Natural killer cell (primary cell): ENCODE measurements at regions of chr6 and their contacts with region 1.

Region 1: DNA sequence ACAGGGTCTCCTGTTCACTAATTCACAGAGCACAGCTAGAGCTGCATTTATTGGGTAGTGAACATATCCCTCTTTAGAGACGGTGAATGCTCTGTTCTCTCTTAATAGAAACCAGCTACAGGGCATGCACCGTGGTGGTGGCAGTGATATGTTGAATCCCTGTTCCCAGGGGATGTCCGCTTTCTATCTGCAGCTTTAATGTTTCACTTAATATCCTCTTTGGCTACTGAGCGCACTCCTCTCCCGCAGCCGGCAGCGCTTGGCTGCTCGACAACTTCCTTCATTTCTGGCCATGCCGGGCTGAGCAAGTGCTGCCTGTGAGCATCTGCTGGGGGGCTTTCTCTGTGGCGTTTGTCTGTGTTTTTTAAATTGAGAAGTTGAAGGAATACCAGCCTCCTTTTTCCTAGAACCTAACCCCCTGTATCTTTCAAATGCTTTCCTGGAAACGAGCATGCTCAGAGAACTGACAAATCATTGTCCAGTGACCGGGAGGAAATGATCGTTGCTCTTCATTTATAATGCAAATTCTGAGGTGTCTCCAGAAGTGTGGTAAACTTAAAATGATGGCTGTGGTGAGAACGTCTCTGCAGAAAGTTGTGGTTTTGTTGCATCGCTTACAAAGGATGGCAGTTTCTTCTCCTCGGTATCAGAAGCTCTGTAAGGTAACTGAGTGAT is 297.9 kb downstream of the UTRN start:
- DNase-seq: peak in 1 of 2 donors; percentile 71
- ATAC-seq: peak; percentile 75 to 85 (median 80)
- H3K4me3 ChIP-seq: peak overlapping the region; percentile 19
- H3K4me3 Mint-ChIP-seq: peak overlapping the region; percentile 94
- H3K27ac ChIP-seq: peak overlapping the region; percentile 34
- H3K27ac Mint-ChIP-seq: peak overlapping the region; percentile 90 to 91
- H3K4me1 ChIP-seq: peaks cover 4% of the 10 kb centered on the region
- H3K4me1 Mint-ChIP-seq: peaks cover 53 to 57% of the 10 kb centered on the region in 2 donors
- H3K27me3 ChIP-seq: no peaks in the 10 kb centered on the region
- H3K27me3 Mint-ChIP-seq: no peaks in the 10 kb centered on the region
- CTCF ChIP-seq: no peak

Region 2: GRCh38 chr6:144659202-144660182 is 76.4 kb after region 1 on chr6:
- intact Hi-C with region 1: loop called (anchors 5 kb)
- DNase-seq: peak in 1 of 2 donors; percentile 32
- ATAC-seq: peak; percentile 61 to 74 (median 64)
- H3K4me3 ChIP-seq: no peak overlapping the region
- H3K4me3 Mint-ChIP-seq: peak overlapping the region; percentile 58
- H3K27ac ChIP-seq: peak overlapping the region; percentile 57
- H3K27ac Mint-ChIP-seq: peak overlapping the region; percentile 85 to 88
- H3K4me1 ChIP-seq: peaks cover 25% of the 10 kb centered on the region
- H3K4me1 Mint-ChIP-seq: peaks cover 84% of the 10 kb centered on the region in 2 donors
- H3K27me3 ChIP-seq: no peaks in the 10 kb centered on the region
- H3K27me3 Mint-ChIP-seq: no peaks in the 10 kb centered on the region
- CTCF ChIP-seq: no peak

Region 3: DNA sequence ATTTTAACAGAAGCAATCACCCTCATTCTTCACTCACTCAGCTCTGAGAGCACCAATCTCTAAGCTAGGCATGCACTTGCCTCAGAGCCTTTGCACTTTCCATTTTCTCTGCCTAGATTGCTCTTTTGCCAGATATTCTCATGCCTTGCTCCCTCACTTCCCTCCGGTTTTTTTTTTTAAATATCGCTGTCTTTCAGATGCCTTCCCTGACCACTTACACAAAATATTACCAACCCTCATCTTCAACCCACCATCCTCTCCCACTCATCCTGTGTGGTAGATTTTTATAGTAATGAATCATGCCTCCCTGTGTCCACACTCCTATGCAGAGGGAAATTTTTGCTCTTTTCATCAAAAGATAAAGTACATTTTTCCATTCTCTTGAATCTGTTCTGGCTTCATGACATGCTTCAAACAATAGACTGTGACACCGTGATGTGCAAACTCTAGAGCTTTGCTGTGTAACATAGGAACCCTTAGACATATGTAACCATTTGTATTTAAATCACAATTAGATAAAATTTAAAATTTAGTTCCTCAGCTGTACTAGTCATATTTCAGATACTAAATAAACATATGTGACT is 139.2 kb after region 1 on chr6:
- intact Hi-C with region 1: loop called (anchors 5 kb)
- DNase-seq: no peak
- ATAC-seq: no peak
- H3K4me3 ChIP-seq: no peak overlapping the region
- H3K4me3 Mint-ChIP-seq: no peak overlapping the region
- H3K27ac ChIP-seq: no peak overlapping the region
- H3K27ac Mint-ChIP-seq: peak overlapping the region; percentile 58 to 73
- H3K4me1 ChIP-seq: peaks cover 8% of the 10 kb centered on the region
- H3K4me1 Mint-ChIP-seq: peaks cover 52 to 71% of the 10 kb centered on the region in 2 donors
- H3K27me3 ChIP-seq: no peaks in the 10 kb centered on the region
- H3K27me3 Mint-ChIP-seq: no peaks in the 10 kb centered on the region
- CTCF ChIP-seq: no peak

Region 4: GRCh38 chr6:144931172-144932035 is 348.3 kb after region 1 on chr6:
- intact Hi-C with region 1: loop called (anchors 1 kb)
- DNase-seq: peak in 1 of 2 donors; percentile 52
- ATAC-seq: peak in 2 of 3 donors; percentile 63 to 70
- H3K4me3 ChIP-seq: no peak overlapping the region
- H3K4me3 Mint-ChIP-seq: no peak overlapping the region
- H3K27ac ChIP-seq: no peak overlapping the region
- H3K27ac Mint-ChIP-seq: no peak overlapping the region
- H3K4me1 ChIP-seq: no peaks in the 10 kb centered on the region
- H3K4me1 Mint-ChIP-seq: peaks cover 5 to 11% of the 10 kb centered on the region in 2 donors
- H3K27me3 ChIP-seq: no peaks in the 10 kb centered on the region
- H3K27me3 Mint-ChIP-seq: peaks cover 0 to 9% of the 10 kb centered on the region in 2 donors
- CTCF ChIP-seq: peak; percentile 66

Region 5: GRCh38 chr6:145028144-145028818 is 445.2 kb after region 1 on chr6:
- intact Hi-C with region 1: loop called (anchors 2 kb)
- DNase-seq: peak in 1 of 2 donors; percentile 37
- ATAC-seq: peak in 1 of 3 donors; percentile 55
- H3K4me3 ChIP-seq: no peak overlapping the region
- H3K4me3 Mint-ChIP-seq: no peak overlapping the region
- H3K27ac ChIP-seq: no peak overlapping the region
- H3K27ac Mint-ChIP-seq: no peak overlapping the region
- H3K4me1 ChIP-seq: no peaks in the 10 kb centered on the region
- H3K4me1 Mint-ChIP-seq: no peaks in the 10 kb centered on the region
- H3K27me3 ChIP-seq: peaks cover 2% of the 10 kb centered on the region
- H3K27me3 Mint-ChIP-seq: peaks cover 14 to 33% of the 10 kb centered on the region in 2 donors
- CTCF ChIP-seq: peak; percentile 30

Region 6: DNA sequence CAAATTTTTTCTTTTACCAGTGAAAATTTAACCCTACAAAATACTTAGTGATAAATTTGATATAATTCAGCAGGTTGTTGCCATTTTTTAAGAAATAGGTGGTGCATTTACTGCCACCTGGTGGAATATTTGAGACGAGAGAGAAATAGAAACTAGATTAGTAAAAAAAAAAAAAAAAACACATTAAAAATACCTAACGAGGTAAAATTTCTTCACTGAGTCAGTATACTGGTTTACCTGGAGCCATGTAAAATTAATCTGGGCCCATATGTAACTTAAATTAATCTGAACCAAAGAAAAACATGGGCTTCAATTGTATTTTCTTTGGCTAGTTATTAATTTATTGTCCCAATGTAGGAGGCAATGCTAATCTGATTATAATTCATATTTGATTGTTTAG is 631.5 kb after region 1 on chr6:
- intact Hi-C with region 1: loop called (anchors 10 kb)
- DNase-seq: peak in 1 of 2 donors; percentile 37
- ATAC-seq: no peak
- H3K4me3 ChIP-seq: no peak overlapping the region
- H3K4me3 Mint-ChIP-seq: no peak overlapping the region
- H3K27ac ChIP-seq: no peak overlapping the region
- H3K27ac Mint-ChIP-seq: no peak overlapping the region
- H3K4me1 ChIP-seq: no peaks in the 10 kb centered on the region
- H3K4me1 Mint-ChIP-seq: no peaks in the 10 kb centered on the region
- H3K27me3 ChIP-seq: no peaks in the 10 kb centered on the region
- H3K27me3 Mint-ChIP-seq: peaks cover 0 to 9% of the 10 kb centered on the region in 2 donors
- CTCF ChIP-seq: peak; percentile 31